ENCODE measurements at regions of chr1 and their contacts with region 1.

Region 1: GRCh38 chr1:246987083-246987690 is 20.7 kb downstream of the ZNF695 start:
- DNase-seq: no peak

Region 2: GRCh38 chr1:246506674-246507481 is 480.3 kb before region 1 on chr1 and contains the start of gene SMYD3:
- in situ Hi-C with region 1: no loop called
- DNase-seq: peak; percentile 82
- total RNA-seq, gene SMYD3: 30.1 and 33.4 TPM in 2 replicates

Region 3: GRCh38 chr1:246860401-246860800 is 126.8 kb before region 1 on chr1:
- in situ Hi-C with region 1: loop called (anchors 25 kb)
- DNase-seq: no peak

Measured in SK-MEL-5 (cell line).